ENCODE measurements at regions of chr21 and their contacts with region 1.

Region 1: GRCh38 chr21:39349211-39350093 is 564 bp upstream of the HMGN1 start:
- DNase-seq: peak; percentile 98
- H3K4me3 ChIP-seq: peak overlapping the region; percentile 83
- H3K27ac ChIP-seq: peak overlapping the region; percentile 72
- H3K4me1 ChIP-seq: peaks cover 36% of the 10 kb centered on the region
- CTCF ChIP-seq: no peak

Region 2: DNA sequence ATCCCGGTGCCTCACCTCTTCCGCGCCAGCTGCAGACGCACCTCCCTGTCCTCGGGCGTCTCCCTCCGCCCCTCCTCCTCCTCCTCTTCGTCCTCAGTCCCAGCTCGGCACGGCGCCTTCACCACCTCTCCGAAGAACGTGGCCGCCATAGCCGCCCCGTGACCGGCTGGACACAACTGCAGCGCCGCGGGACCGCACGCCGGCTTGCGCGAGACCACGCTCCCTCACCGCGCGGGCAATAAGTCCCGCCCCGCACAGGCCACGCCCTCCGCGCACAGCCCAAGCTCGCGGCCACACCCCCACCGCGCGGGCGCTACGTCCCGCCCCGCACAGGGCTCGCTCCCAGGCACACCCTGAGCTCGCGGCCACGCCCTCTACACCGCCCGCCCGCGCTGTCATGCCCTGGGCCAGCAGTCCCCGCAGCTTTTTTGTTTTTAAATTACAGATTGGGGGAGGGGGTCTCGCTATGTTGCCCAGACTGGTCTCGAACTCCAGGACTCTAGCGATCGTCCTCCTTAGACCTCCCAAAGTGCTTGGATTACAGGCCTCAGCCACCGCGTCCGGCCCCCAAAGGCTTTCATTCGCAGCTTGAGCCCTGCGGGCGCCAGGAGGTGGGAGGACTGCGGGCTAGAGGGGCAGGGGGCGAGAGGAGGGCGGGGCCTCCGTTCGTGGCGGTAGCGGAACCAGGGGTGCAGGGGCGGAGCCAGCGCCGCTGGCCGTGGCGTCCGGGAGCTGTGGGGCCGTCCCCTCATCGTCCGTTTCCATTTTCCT is 166.0 kb before region 1 on chr21 and contains the start of gene PSMG1:
- CTCF ChIA-PET with region 1: interaction called, 4 read pairs
- POLR2A ChIA-PET with region 1: interaction called, 5 read pairs
- intact Hi-C with region 1: loop called (anchors 2 kb)
- DNase-seq: peak; percentile 95
- H3K4me3 ChIP-seq: peak within 1 kb of the TSS; percentile 96
- H3K27ac ChIP-seq: peak within 1 kb of the TSS; percentile 62
- H3K4me1 ChIP-seq: peaks cover 35% of the 10 kb centered on the region
- CTCF ChIP-seq: no peak
- total RNA-seq, gene PSMG1: 76.9 and 87.2 TPM in 2 replicates

Region 3: DNA sequence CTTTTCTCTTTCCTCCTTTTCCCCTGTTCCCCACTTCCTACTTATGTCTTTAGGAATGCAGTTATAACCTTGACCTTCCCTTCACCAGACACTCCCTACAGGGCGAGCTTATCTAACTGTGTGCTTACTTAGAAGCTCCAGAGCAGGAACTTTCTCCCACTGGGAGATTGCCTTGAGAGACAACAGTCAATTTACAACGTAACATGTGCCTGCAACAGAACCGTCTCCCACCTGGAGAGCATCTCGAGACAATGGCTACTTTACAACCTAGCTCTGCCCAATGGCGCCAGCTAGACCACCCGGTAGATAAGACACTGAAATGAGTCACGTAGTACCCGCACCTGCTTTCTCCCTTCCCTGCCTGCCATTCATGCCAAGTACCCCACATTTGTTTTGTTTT is 17.3 kb before region 1 on chr21:
- CTCF ChIA-PET with region 1: no interaction called
- POLR2A ChIA-PET with region 1: interaction called, 15 read pairs
- intact Hi-C with region 1: no loop called
- DNase-seq: no peak
- H3K4me3 ChIP-seq: no peak overlapping the region
- H3K27ac ChIP-seq: no peak overlapping the region
- H3K4me1 ChIP-seq: peaks cover 27% of the 10 kb centered on the region
- CTCF ChIP-seq: no peak

Region 4: DNA sequence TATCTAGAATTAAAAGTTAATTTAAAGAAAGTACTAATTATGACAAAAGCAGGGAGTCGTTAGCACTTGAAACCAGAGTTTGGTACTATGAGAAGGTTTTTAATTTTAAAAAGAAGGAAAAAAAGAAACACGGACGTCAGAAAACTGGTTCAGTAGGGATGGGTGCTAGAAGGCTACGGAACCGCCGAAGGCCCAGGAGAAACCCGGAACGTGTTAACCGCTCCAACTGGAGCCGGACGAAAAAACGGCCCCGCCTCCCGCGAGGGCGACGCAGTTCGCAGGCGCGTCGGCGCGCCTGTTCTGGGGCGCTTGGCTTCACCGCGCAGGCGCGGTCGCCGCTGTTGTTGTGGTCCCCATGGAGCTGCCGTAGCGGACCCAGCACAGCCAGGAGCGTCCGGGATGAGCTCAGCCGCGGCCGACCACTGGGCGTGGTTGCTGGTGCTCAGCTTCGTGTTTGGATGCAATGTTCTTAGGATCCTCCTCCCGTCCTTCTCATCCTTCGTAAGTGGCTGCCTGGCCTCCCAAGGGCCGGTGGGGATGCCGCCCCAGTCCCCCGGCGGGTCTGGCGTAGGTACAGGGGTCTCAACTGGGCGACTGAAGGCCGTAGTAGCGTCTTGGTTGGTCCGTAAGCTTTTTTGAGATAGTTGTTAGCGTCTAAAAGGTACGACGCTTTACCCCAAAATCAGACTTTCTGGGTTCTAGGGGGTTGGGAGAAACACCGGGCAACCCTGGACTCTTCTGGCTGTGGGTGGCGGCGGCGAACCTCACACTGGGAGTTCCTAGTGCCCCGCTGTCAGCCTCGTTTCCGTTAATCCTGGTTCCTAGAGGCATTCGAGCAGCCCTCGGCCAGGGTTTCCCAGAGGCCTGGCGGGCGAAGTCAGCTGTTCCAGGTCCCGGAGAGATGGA is 30.8 kb after region 1 on chr21:
- CTCF ChIA-PET with region 1: interaction called, 5 read pairs
- POLR2A ChIA-PET with region 1: interaction called, 13 read pairs
- intact Hi-C with region 1: loop called (anchors 2 kb)
- DNase-seq: peak; percentile 92
- H3K4me3 ChIP-seq: peak overlapping the region; percentile 93
- H3K27ac ChIP-seq: peak overlapping the region; percentile 4
- H3K4me1 ChIP-seq: peaks cover 17% of the 10 kb centered on the region
- CTCF ChIP-seq: no peak

Region 5: DNA sequence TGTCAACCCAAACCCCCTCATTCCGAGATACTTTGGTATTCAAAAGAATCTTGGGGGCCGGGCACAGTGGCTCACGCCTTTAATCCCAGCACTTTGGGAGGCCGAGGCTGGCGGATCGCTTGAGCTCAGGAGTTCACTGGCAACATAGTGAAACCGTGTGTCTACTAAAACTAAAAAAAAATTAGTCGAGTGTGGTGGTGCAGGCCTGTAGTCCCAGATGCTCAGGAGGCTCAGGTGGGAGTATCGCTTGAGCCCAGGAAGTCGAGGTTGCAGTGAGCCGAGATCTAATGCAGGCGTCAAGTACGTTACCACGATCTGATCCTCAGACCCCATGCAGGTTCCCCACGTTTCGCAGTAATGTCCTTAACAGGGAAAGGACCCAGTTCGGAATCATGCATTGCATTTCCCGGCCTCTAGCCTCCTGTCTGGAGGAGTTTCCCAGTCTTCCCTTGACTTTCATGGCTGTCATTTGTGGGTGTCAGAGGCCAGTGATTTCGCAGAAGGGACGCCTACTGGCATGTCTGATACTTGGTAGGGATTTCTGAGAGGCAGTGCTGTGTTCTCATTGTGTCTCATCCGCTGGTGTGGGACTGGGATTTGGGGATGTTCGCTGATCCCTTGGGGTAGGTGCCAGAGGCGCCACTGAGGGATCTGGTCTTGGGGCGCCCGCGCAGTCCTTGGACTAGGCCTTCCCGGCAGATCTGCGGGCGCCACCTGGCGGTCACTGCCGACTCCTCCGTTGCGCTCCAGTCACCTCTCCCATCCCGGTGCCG is 38.8 kb after region 1 on chr21:
- CTCF ChIA-PET with region 1: no interaction called
- POLR2A ChIA-PET with region 1: interaction called, 8 read pairs
- intact Hi-C with region 1: loop called (anchors 1 kb)
- DNase-seq: peak; percentile 84
- H3K4me3 ChIP-seq: peak overlapping the region; percentile 68
- H3K27ac ChIP-seq: peak overlapping the region; percentile 64
- H3K4me1 ChIP-seq: peaks cover 22% of the 10 kb centered on the region
- CTCF ChIP-seq: peak; percentile 94

Region 6: DNA sequence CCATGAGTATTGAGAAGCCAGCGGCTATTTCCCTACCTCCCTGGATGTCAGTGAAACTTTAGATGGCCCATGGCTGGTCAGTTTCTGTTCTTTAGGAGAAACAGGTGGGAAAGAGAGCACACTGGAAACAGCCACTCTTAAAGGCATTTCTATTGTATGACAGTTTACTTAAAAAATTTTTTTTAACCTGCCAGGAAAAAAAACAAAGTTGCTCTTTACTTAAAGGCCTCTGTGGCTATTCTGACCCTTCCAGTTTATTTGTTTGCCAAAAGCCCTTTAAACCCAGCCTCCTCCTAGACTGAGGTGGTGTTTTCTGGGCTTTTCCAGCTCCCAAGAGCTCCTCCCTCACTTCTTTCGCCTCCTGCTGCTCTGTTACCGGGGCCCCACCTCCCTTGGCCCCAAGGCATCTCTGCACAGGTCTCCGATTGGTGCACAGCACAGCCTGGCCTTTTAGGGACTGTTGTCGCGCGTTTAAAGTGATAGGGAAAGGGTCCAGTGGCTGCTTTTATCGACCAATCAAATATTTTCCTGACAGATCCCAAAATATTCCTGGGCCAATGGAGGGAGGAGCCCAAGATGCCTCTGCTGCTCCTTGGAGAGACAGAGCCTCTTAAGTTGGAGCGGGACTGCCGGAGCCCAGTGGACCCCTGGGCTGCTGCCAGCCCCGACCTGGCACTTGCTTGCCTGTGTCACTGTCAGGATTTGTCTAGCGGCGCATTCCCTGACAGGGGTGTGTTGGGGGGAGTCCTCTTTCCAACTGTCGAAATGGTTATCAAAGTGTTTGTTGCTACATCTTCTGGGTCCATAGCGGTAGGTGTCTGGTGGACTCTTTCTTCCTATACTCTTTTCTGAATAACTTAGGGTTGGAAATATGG is 102.1 kb after region 1 on chr21 and contains the start of gene SH3BGR:
- CTCF ChIA-PET with region 1: no interaction called
- POLR2A ChIA-PET with region 1: no interaction called
- intact Hi-C with region 1: no loop called
- DNase-seq: no peak
- H3K4me3 ChIP-seq: no peak within 1 kb of the TSS
- H3K27ac ChIP-seq: no peak within 1 kb of the TSS
- H3K4me1 ChIP-seq: no peaks in the 10 kb centered on the region
- CTCF ChIP-seq: no peak
- total RNA-seq, gene SH3BGR: 0.80 TPM in 1 of 2 replicates, not detected in the other

Region 7: DNA sequence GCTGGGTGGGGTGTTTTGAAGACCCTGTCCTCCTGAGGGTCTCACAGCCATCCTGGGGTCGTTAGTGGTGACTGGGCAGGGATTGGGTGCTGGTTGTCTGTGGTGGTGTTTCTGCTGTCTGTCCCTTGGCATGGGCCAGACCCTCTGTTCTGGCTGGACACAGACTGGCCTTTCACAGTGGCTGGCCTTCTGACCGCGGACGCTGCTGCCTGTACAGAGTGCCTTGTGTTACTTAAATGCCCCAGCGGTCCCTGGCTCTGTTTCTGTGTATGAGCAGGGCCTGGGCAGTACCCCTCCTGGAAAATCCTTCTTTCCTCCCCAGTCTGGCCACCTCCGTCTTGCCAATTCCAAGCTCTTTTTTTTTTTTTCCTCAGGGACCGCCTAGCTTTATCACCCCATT is 153.2 kb after region 1 on chr21:
- CTCF ChIA-PET with region 1: no interaction called
- POLR2A ChIA-PET with region 1: no interaction called
- intact Hi-C with region 1: no loop called
- DNase-seq: no peak
- H3K4me3 ChIP-seq: no peak overlapping the region
- H3K27ac ChIP-seq: no peak overlapping the region
- H3K4me1 ChIP-seq: no peaks in the 10 kb centered on the region
- CTCF ChIP-seq: no peak

Region 8: GRCh38 chr21:40797891-40798290 is 1448.4 kb after region 1 on chr21:
- CTCF ChIA-PET with region 1: no interaction called
- POLR2A ChIA-PET with region 1: no interaction called
- intact Hi-C with region 1: no loop called
- DNase-seq: no peak
- H3K4me3 ChIP-seq: no peak overlapping the region
- H3K27ac ChIP-seq: no peak overlapping the region
- H3K4me1 ChIP-seq: no peaks in the 10 kb centered on the region
- CTCF ChIP-seq: no peak